AG04449 (cell line): ENCODE measurements at regions of chr5 and their contacts with region 1.

Region 1: DNA sequence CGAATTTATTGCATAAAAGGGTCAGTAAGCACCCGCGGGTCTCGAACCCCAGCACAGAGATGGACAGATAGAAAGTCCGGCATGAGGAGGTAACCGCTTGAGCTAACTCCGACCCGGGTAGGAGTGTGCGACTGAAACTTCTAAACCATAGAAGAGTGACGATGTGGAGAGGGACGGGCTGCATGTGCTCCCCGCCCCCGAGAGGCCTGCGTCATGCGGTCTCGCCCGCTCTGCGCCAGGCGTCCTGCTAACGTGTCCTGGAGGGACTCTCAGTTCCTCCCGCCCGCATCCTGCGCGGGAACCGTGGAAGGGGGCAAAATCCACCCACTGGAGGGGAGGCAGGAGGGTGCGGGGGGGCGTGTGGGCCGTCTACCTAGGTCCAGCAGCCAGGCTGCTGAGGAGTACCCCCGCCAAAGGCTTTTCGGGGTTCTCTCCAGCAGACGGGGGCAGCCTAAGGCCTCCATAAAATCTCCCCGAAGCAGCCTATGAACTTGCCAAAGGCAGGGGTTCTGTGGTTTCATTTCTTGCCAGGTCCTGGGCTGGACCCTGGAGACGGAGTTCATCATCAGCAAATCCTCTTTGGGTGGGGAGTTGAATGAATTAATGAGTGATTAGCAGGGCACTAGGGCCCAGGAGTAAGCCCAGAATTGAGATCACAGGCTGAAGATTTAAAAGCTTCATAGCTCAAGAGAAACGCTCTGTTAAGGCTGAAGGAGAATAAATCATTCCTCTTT is 51.9 kb downstream of the TGFBI start:
- DNase-seq: peak; percentile 77
- H3K4me3 ChIP-seq: peak overlapping the region; percentile 60
- CTCF ChIP-seq: no peak

Region 2: GRCh38 chr5:135880278-135880677 is 200.4 kb before region 1 on chr5:
- CTCF ChIA-PET with region 1: interaction called, 39 read pairs
- POLR2A ChIA-PET with region 1: no interaction called
- DNase-seq: no peak
- H3K4me3 ChIP-seq: no peak overlapping the region
- CTCF ChIP-seq: peak; percentile 27

Region 3: DNA sequence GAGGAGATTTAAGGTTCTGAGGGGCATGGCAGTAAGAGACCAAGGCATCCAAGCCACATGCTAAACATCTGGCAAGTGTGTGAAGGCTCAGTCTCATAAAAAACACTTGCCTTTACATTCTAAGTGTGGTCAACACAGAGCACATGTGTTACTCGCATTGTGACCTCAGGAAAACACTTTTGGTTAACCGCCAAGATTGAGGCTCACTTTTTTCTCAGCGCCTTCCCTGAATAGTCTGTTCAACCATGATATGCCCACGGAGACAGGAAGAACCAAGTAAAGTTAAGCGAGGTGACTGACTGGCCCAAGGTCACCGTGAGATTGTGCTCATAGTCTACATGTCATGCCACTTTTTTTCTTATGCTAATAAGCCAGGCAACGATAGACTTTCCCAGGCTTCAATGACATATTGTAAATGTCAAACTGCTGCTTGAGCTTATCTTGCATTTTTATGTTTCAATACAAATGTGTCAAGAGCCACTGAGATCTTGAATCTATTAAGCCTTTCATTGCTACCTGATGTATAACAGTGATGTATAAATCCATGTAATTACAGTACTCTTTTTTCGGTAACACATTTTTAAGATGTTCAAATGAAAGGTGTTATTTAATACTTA is 163.9 kb before region 1 on chr5:
- CTCF ChIA-PET with region 1: interaction called, 10 read pairs
- POLR2A ChIA-PET with region 1: no interaction called
- DNase-seq: no peak
- H3K4me3 ChIP-seq: no peak overlapping the region
- CTCF ChIP-seq: no peak

Region 4: DNA sequence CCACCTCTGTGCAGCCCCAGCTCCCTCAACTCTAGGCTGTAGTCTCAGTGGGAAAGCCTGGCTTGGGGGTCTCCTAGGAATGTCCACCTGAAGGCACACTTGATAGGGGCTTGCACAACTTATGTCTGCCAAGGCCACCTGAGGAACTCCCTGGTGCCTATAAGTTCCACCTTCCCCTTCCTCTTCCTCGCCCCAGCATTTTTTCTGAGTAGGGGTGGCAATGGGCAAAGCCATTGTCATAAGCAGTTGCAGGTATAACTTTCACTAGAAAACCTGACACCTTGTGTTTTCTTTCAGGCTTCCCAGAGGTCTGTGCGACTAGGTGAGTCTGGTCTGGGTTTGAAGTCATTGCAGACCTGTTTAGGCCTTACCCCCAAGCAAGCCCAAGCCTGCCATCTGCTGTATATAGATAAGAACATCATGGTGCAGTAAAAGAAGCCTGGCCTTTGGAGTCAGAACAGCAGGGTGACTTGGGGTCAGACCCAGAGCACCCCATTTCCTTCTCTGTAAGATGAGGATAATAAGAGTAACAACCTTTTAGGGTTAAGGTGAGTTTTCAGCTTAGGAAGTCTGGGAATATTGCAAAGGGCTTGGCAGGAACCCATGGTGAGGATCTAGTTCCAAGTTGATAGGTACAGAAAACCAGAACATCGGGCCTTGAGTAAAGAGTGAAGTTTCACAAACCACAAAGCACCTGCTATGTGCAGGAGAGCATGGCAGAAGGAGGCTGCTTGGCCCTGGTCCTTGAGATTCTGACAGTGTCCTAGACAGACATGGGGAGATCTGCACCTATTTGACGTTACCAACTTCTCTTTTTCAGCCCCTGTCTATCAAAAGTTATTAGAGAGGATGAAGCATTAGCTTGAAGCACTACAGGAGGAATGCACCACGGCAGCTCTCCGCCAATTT is 18.0 kb before region 1 on chr5:
- CTCF ChIA-PET with region 1: interaction called, 18 read pairs
- POLR2A ChIA-PET with region 1: interaction called, 5 read pairs
- DNase-seq: no peak
- H3K4me3 ChIP-seq: no peak overlapping the region
- CTCF ChIP-seq: peak; percentile 38

Region 5: DNA sequence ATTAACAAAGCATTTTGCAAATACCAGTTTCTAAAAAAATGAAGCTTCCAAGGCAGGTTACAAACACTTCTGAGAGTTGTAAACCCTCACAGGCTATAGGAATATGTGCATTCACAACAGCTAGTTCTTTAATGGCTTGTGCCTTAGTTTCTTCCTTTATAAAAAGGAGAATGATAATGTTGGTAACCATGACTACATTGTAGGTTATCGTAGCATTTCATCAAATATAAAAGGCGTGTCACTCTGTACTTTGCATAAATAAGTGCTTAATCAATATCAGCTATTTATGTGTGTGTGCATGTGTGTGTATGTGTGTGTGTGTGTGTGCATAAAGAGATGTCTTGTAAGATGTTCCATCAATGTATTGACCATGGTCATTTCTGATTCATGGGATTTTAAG is 43.7 kb after region 1 on chr5:
- CTCF ChIA-PET with region 1: interaction called, 12 read pairs
- POLR2A ChIA-PET with region 1: no interaction called
- DNase-seq: no peak
- H3K4me3 ChIP-seq: no peak overlapping the region
- CTCF ChIP-seq: no peak

Region 6: GRCh38 chr5:136212252-136212721 is 131.6 kb after region 1 on chr5:
- CTCF ChIA-PET with region 1: interaction called, 26 read pairs
- POLR2A ChIA-PET with region 1: no interaction called
- DNase-seq: no peak
- H3K4me3 ChIP-seq: no peak overlapping the region
- CTCF ChIP-seq: peak; percentile 89